Endothelial cell of umbilical vein (primary cell): ENCODE measurements at regions of chr5 and their contacts with region 1.

Region 1: DNA sequence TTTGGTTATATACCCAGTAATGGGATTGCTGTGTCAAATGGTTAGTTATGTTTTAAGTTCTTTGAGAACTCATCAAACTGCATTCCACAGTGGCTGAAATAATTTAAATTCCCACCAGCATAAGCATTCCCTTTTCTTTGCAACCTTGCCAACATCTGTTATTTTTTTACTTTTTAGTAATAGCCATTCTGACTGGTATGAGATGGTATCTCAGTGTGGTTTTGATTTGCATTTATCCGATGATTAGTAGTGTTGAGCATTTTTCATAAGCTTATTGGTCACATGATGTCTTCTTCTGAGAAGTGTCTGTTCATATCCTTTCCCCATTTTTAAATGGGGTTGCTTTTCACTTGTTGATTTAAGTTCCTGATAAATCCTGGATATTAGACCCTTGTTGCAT is 435.7 kb upstream of the RIOK2 start:
- DNase-seq: no peak
- H3K4me3 ChIP-seq: no peak overlapping the region
- H3K27ac ChIP-seq: no peak overlapping the region
- H3K4me1 ChIP-seq: no peaks in the 10 kb centered on the region
- H3K27me3 ChIP-seq: no peaks in the 10 kb centered on the region
- CTCF ChIP-seq: no peak
- POLR2A ChIP-seq: no peak

Region 2: DNA sequence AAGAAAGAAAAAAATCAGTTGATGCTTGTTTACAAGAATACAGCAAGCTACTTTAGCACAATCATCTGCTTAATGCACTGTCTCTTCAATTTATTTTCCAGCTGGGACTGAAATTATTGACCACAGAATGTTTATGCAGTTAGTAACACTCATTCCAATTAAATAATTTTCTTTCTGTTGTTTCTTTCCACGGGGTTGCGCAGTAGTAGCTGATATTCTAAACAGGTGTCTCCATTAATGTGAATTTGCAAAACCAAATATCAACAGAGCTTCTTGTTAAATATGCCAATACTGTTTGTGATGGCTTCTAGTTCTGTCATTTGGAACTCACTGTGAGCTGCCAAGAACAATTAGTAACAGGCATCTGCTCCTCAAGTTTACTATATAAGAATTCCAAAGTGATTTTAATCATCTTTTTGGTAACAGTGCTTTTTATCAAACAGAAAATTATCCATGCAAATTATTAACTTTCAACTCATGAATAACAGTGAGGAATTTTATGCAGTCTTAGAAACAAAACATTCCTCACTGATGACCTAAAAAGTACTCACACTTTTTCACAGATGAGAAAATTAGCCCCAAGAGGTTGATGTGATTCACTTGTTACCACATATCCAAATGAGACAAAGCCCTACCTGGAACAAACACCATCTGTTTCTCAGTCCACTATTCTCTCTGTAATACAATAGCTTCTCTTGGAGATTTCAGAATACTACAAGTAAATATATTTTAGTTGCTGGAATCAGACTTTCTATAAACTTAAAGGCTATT is 587.2 kb after region 1 on chr5:
- CTCF ChIA-PET with region 1: no interaction called
- POLR2A ChIA-PET with region 1: no interaction called
- dilution Hi-C with region 1: no loop called
- intact Hi-C with region 1: loop called (anchors 5 kb)
- DNase-seq: no peak
- H3K4me3 ChIP-seq: no peak overlapping the region
- H3K27ac ChIP-seq: no peak overlapping the region
- H3K4me1 ChIP-seq: no peaks in the 10 kb centered on the region
- H3K27me3 ChIP-seq: no peaks in the 10 kb centered on the region
- CTCF ChIP-seq: no peak
- POLR2A ChIP-seq: no peak